Caco-2 (cell line): ENCODE measurements at regions of chr12 and their contacts with region 1.

Region 1: GRCh38 chr12:101323255-101323654 is 43.4 kb downstream of the UTP20 start:
- DNase-seq: no peak
- H3K4me3 ChIP-seq: no peak overlapping the region
- H3K4me3 Mint-ChIP-seq: no peak overlapping the region
- H3K27ac Mint-ChIP-seq: no peak overlapping the region
- H3K4me1 ChIP-seq: no peaks in the 10 kb centered on the region
- H3K4me1 Mint-ChIP-seq: no peaks in the 10 kb centered on the region
- H3K27me3 ChIP-seq: no peaks in the 10 kb centered on the region
- H3K27me3 Mint-ChIP-seq: no peaks in the 10 kb centered on the region
- CTCF ChIP-seq: no peak

Region 2: GRCh38 chr12:100926669-100927248 is 396.5 kb before region 1 on chr12:
- CTCF ChIA-PET with region 1: no interaction called
- POLR2A ChIA-PET with region 1: no interaction called
- intact Hi-C with region 1: loop called (anchors 5 kb)
- DNase-seq: peak; percentile 55 to 61
- H3K4me3 ChIP-seq: no peak overlapping the region
- H3K4me3 Mint-ChIP-seq: no peak overlapping the region
- H3K27ac Mint-ChIP-seq: no peak overlapping the region
- H3K4me1 ChIP-seq: no peaks in the 10 kb centered on the region
- H3K4me1 Mint-ChIP-seq: no peaks in the 10 kb centered on the region
- H3K27me3 ChIP-seq: no peaks in the 10 kb centered on the region
- H3K27me3 Mint-ChIP-seq: peaks cover 5% of the 10 kb centered on the region
- CTCF ChIP-seq: peak; percentile 43 to 71

Region 3: DNA sequence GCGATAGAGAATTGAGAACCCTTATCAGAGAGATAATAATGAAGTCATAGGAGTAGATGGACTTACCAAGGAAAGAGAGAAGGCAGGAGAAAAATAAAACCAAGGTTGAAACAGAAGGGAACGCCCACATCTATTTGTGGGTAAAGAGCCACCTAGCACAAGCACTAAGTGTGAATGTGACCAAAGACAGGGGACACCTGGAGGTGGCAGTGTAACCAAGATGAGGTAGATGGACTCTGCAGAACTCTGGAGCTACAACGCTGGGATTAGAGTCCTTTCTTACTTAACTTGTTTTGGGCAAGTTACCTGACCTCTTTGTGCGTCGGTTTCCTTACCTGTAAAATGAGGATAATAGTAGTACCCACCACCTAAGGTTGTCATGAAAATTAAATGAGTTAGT is 215.1 kb before region 1 on chr12:
- CTCF ChIA-PET with region 1: no interaction called
- POLR2A ChIA-PET with region 1: no interaction called
- intact Hi-C with region 1: loop called (anchors 2 kb)
- DNase-seq: peak in 1 of 2 experiments; percentile 8
- H3K4me3 ChIP-seq: no peak overlapping the region
- H3K4me3 Mint-ChIP-seq: no peak overlapping the region
- H3K27ac Mint-ChIP-seq: no peak overlapping the region
- H3K4me1 ChIP-seq: no peaks in the 10 kb centered on the region
- H3K4me1 Mint-ChIP-seq: no peaks in the 10 kb centered on the region
- H3K27me3 ChIP-seq: no peaks in the 10 kb centered on the region
- H3K27me3 Mint-ChIP-seq: no peaks in the 10 kb centered on the region
- CTCF ChIP-seq: no peak

Region 4: GRCh38 chr12:101336437-101336836 is 13.2 kb after region 1 on chr12:
- CTCF ChIA-PET with region 1: no interaction called
- POLR2A ChIA-PET with region 1: no interaction called
- intact Hi-C with region 1: no loop called
- DNase-seq: no peak
- H3K4me3 ChIP-seq: no peak overlapping the region
- H3K4me3 Mint-ChIP-seq: no peak overlapping the region
- H3K27ac Mint-ChIP-seq: no peak overlapping the region
- H3K4me1 ChIP-seq: no peaks in the 10 kb centered on the region
- H3K4me1 Mint-ChIP-seq: no peaks in the 10 kb centered on the region
- H3K27me3 ChIP-seq: no peaks in the 10 kb centered on the region
- H3K27me3 Mint-ChIP-seq: no peaks in the 10 kb centered on the region
- CTCF ChIP-seq: no peak

Region 5: GRCh38 chr12:102896067-102896466 is 1572.8 kb after region 1 on chr12:
- CTCF ChIA-PET with region 1: no interaction called
- POLR2A ChIA-PET with region 1: no interaction called
- intact Hi-C with region 1: no loop called
- DNase-seq: no peak
- H3K4me3 ChIP-seq: no peak overlapping the region
- H3K4me3 Mint-ChIP-seq: no peak overlapping the region
- H3K27ac Mint-ChIP-seq: no peak overlapping the region
- H3K4me1 ChIP-seq: peaks cover 4% of the 10 kb centered on the region; the same call in 1 of the 2 replicates
- H3K4me1 Mint-ChIP-seq: no peaks in the 10 kb centered on the region
- H3K27me3 ChIP-seq: no peaks in the 10 kb centered on the region; the same call in 1 of the 2 replicates
- H3K27me3 Mint-ChIP-seq: no peaks in the 10 kb centered on the region
- CTCF ChIP-seq: no peak